Naive thymus-derived CD4-positive, alpha-beta T cell (primary cell): ENCODE measurements at regions of chr5 and their contacts with region 1.

Region 1: GRCh38 chr5:151213800-151214613 is 9.9 kb downstream of the CCDC69 start:
- DNase-seq: peak; percentile 53 to 85 (median 79)
- ATAC-seq: peak; percentile 90
- H3K4me3 ChIP-seq: peak overlapping the region; percentile 74
- H3K4me3 Mint-ChIP-seq: peak overlapping the region; percentile 80 to 93 (median 89)
- H3K27ac ChIP-seq: peak overlapping the region; percentile 93
- H3K27ac Mint-ChIP-seq: peak overlapping the region; percentile 90 to 98 (median 97)
- H3K4me1 ChIP-seq: peaks cover 80 to 82% of the 10 kb centered on the region in 2 donors
- H3K4me1 Mint-ChIP-seq: peaks cover 56 to 95% (median 84%) of the 10 kb centered on the region in 7 donors
- H3K27me3 ChIP-seq: no peaks in the 10 kb centered on the region
- H3K27me3 Mint-ChIP-seq: no peaks in the 10 kb centered on the region

Region 2: GRCh38 chr5:151107738-151108508 is 106.1 kb before region 1 on chr5:
- CTCF ChIA-PET with region 1: no interaction called
- POLR2A ChIA-PET with region 1: no interaction called
- intact Hi-C with region 1: no loop called
- DNase-seq: no peak
- ATAC-seq: no peak
- H3K4me3 ChIP-seq: no peak overlapping the region
- H3K4me3 Mint-ChIP-seq: no peak overlapping the region
- H3K27ac ChIP-seq: no peak overlapping the region
- H3K27ac Mint-ChIP-seq: peak overlapping the region in 8 of 9 donors; percentile 0 to 82 (median 26)
- H3K4me1 ChIP-seq: no peaks in the 10 kb centered on the region
- H3K4me1 Mint-ChIP-seq: peaks cover 0 to 14% (median 6%) of the 10 kb centered on the region in 7 donors
- H3K27me3 ChIP-seq: no peaks in the 10 kb centered on the region
- H3K27me3 Mint-ChIP-seq: no peaks in the 10 kb centered on the region

Region 3: GRCh38 chr5:151126199-151126645 is 87.8 kb before region 1 on chr5:
- CTCF ChIA-PET with region 1: interaction called, 7 read pairs
- POLR2A ChIA-PET with region 1: interaction called, 8 read pairs
- intact Hi-C with region 1: loop called in 1 of 2 experiments (anchors 2 kb)
- DNase-seq: peak; percentile 41 to 71 (median 64)
- ATAC-seq: peak; percentile 73
- H3K4me3 ChIP-seq: no peak overlapping the region
- H3K4me3 Mint-ChIP-seq: peak overlapping the region in 9 of 10 donors; percentile 22 to 84 (median 54)
- H3K27ac ChIP-seq: peak overlapping the region; percentile 72
- H3K27ac Mint-ChIP-seq: peak overlapping the region; percentile 68 to 99 (median 91)
- H3K4me1 ChIP-seq: peaks cover under 1 to 27% of the 10 kb centered on the region in 2 donors
- H3K4me1 Mint-ChIP-seq: peaks cover 32 to 75% (median 57%) of the 10 kb centered on the region in 7 donors
- H3K27me3 ChIP-seq: no peaks in the 10 kb centered on the region
- H3K27me3 Mint-ChIP-seq: no peaks in the 10 kb centered on the region

Region 4: DNA sequence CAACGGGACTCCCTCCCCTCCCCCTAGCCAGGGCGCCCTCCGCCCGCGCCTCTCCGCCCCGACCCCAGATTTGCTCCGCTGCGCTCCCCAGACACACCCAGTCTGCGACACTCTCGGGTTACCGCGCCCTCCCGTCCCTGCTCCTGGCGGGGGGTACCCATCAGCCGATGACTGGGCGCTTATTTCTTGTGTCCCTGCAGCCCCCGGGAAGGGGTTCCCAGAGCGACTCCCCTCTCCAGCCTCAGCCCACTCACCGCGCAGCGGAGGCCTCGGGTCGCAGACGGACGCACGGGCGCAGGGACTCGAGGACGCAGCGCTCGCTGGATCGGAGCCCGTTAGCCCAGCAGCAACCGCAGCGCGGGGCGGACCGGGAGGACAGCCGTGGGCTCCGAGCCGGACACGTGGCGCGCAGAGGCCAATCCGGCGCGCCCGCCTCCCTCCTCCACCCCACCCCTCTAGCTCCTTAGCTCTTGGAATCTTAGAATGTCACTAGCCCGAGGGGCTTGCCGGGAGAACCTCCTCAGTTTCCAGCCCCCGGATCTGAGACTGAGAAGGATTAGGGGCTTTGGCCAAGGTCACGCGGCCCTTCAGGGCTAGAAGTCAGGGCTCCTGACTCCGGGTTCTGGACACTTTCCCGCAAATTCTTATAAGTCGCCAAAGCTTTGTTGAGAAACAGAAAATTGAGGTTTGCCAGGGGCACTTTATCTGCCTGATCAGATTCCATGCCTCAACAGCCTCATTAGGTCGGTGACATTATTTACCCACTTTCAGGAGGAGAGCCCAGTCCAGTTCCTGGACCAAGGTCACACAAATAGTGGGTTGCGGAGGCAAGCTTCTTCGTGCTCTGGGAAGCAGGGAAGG is 56.4 kb before region 1 on chr5 and contains the start of gene ANXA6:
- CTCF ChIA-PET with region 1: no interaction called
- POLR2A ChIA-PET with region 1: interaction called, 6 read pairs
- intact Hi-C with region 1: loop called (anchors 1 to 2 kb)
- DNase-seq: peak; percentile 48 to 79 (median 57)
- ATAC-seq: peak; percentile 92
- H3K4me3 ChIP-seq: peak within 1 kb of the TSS; percentile 85
- H3K4me3 Mint-ChIP-seq: peak within 1 kb of the TSS; percentile 94 to 99 (median 96)
- H3K27ac ChIP-seq: peak within 1 kb of the TSS; percentile 92
- H3K27ac Mint-ChIP-seq: peak within 1 kb of the TSS; percentile 90 to 99 (median 96)
- H3K4me1 ChIP-seq: peaks cover 36 to 44% of the 10 kb centered on the region in 2 donors
- H3K4me1 Mint-ChIP-seq: peaks cover 39 to 69% (median 57%) of the 10 kb centered on the region in 7 donors
- H3K27me3 ChIP-seq: no peaks in the 10 kb centered on the region
- H3K27me3 Mint-ChIP-seq: no peaks in the 10 kb centered on the region
- total RNA-seq, gene ANXA6: 212 to 512 (median 272) TPM

Region 5: GRCh38 chr5:151196556-151197290 is 17.3 kb before region 1 on chr5:
- CTCF ChIA-PET with region 1: interaction called, 3 read pairs
- POLR2A ChIA-PET with region 1: interaction called, 44 read pairs
- intact Hi-C with region 1: loop called (anchors 2 kb)
- DNase-seq: peak in 3 of 9 donors; percentile 7 to 36 (median 33)
- ATAC-seq: peak; percentile 44
- H3K4me3 ChIP-seq: no peak overlapping the region
- H3K4me3 Mint-ChIP-seq: peak overlapping the region in 6 of 10 donors; percentile 9 to 62 (median 30)
- H3K27ac ChIP-seq: peak overlapping the region; percentile 58
- H3K27ac Mint-ChIP-seq: peak overlapping the region; percentile 6 to 91 (median 79)
- H3K4me1 ChIP-seq: peaks cover 13 to 21% of the 10 kb centered on the region in 2 donors
- H3K4me1 Mint-ChIP-seq: peaks cover 30 to 72% (median 68%) of the 10 kb centered on the region in 7 donors
- H3K27me3 ChIP-seq: no peaks in the 10 kb centered on the region
- H3K27me3 Mint-ChIP-seq: no peaks in the 10 kb centered on the region

Region 6: GRCh38 chr5:151239237-151239861 is 25.3 kb after region 1 on chr5:
- CTCF ChIA-PET with region 1: interaction called, 6 read pairs
- POLR2A ChIA-PET with region 1: interaction called, 17 read pairs
- intact Hi-C with region 1: loop called (anchors 1 to 2 kb)
- DNase-seq: peak in 5 of 9 donors; percentile 44 to 60 (median 49)
- ATAC-seq: peak; percentile 77
- H3K4me3 ChIP-seq: no peak overlapping the region
- H3K4me3 Mint-ChIP-seq: peak overlapping the region in 1 of 10 donors; percentile 60
- H3K27ac ChIP-seq: no peak overlapping the region
- H3K27ac Mint-ChIP-seq: peak overlapping the region in 2 of 9 donors; percentile 68 to 78
- H3K4me1 ChIP-seq: peaks cover 5 to 15% of the 10 kb centered on the region in 2 donors
- H3K4me1 Mint-ChIP-seq: peaks cover 8 to 42% (median 21%) of the 10 kb centered on the region in 7 donors
- H3K27me3 ChIP-seq: no peaks in the 10 kb centered on the region
- H3K27me3 Mint-ChIP-seq: no peaks in the 10 kb centered on the region

Region 7: GRCh38 chr5:151288180-151288579 is 74.2 kb after region 1 on chr5:
- CTCF ChIA-PET with region 1: no interaction called
- POLR2A ChIA-PET with region 1: no interaction called
- intact Hi-C with region 1: no loop called
- DNase-seq: no peak
- ATAC-seq: no peak
- H3K4me3 ChIP-seq: no peak overlapping the region
- H3K4me3 Mint-ChIP-seq: no peak overlapping the region
- H3K27ac ChIP-seq: no peak overlapping the region
- H3K27ac Mint-ChIP-seq: no peak overlapping the region
- H3K4me1 ChIP-seq: no peaks in the 10 kb centered on the region
- H3K4me1 Mint-ChIP-seq: peaks cover 0 to 2% (median 0%) of the 10 kb centered on the region in 7 donors
- H3K27me3 ChIP-seq: no peaks in the 10 kb centered on the region
- H3K27me3 Mint-ChIP-seq: peaks cover 0 to 8% (median 0%) of the 10 kb centered on the region in 5 donors

Region 8: GRCh38 chr5:151384106-151384505 is 170.1 kb after region 1 on chr5:
- CTCF ChIA-PET with region 1: no interaction called
- POLR2A ChIA-PET with region 1: no interaction called
- intact Hi-C with region 1: no loop called
- DNase-seq: no peak
- ATAC-seq: no peak
- H3K4me3 ChIP-seq: no peak overlapping the region
- H3K4me3 Mint-ChIP-seq: no peak overlapping the region
- H3K27ac ChIP-seq: no peak overlapping the region
- H3K27ac Mint-ChIP-seq: no peak overlapping the region
- H3K4me1 ChIP-seq: no peaks in the 10 kb centered on the region
- H3K4me1 Mint-ChIP-seq: no peaks in the 10 kb centered on the region
- H3K27me3 ChIP-seq: no peaks in the 10 kb centered on the region
- H3K27me3 Mint-ChIP-seq: peaks cover 6 to 28% (median 26%) of the 10 kb centered on the region in 5 donors